Testis (tissue), 5 donors: ENCODE measurements at regions of chr3 and their contacts with region 1.

Region 1: GRCh38 chr3:47522082-47522987 is 8.8 kb upstream of the ELP6 start:
- DNase-seq: peak; percentile 93
- H3K4me3 ChIP-seq: no peak overlapping the region
- H3K27ac ChIP-seq: no peak overlapping the region
- H3K4me1 ChIP-seq: peaks cover 4% of the 10 kb centered on the region
- H3K27me3 ChIP-seq: no peaks in the 10 kb centered on the region
- CTCF ChIP-seq: peak; percentile 80 to 97 (median 95)
- POLR2A ChIP-seq: no peak

Region 2: GRCh38 chr3:47646362-47646761 is 124.0 kb after region 1 on chr3:
- intact Hi-C with region 1: no loop called
- DNase-seq: no peak
- H3K4me3 ChIP-seq: no peak overlapping the region
- H3K27ac ChIP-seq: no peak overlapping the region
- H3K4me1 ChIP-seq: no peaks in the 10 kb centered on the region
- H3K27me3 ChIP-seq: no peaks in the 10 kb centered on the region
- CTCF ChIP-seq: no peak
- POLR2A ChIP-seq: no peak

Region 3: DNA sequence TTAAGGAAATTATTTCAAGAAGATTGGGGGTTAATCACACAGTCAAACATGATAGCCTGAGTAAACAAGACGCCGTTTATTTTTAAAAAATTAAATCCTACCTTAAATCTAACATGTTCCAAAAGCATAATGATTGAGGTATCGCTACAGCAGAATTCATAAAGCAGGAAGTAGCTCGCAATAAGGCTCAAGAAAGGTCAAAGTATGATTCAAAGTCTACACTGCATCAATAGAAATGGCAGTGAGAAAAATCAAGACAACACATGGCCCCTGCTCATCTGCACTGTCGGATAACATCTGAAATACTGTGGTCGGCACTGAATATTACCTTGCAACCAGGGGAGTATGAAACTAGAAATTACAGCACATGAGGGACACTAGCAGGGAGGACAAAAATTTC is 166.2 kb after region 1 on chr3:
- intact Hi-C with region 1: no loop called
- DNase-seq: no peak
- H3K4me3 ChIP-seq: no peak overlapping the region
- H3K27ac ChIP-seq: no peak overlapping the region
- H3K4me1 ChIP-seq: no peaks in the 10 kb centered on the region
- H3K27me3 ChIP-seq: no peaks in the 10 kb centered on the region
- CTCF ChIP-seq: no peak
- POLR2A ChIP-seq: no peak

Region 4: DNA sequence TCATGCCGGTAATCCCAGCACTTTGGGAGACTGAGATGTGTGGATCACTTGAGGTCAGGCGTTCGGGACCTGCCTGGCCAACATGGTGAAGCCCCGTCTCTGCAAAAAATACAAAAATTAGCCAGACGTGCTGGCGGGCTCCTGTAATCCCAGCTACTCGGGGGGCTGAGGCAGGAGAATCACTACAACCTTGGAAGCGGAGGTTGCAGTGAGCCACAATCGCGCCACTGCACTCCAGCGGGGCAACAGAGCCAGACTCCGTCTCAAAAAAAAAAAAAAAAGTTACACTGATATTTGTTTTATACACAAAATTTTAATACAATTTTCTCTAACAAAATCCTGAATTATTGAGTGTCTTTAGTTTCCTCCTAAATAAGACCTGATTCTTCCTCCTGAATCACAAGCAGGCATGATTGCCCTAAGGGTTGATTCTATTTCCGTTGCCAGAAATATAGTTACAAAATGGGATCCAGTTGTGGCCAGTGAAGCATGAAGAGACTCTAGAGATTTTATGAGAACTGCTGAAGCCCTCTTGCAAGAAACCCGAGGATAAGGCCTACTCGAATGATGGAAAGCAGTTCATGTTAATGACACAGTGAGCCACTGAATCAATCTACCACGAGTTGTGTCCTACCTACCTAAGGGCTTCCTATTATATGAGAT is 269.0 kb after region 1 on chr3:
- intact Hi-C with region 1: loop called (anchors 5 kb)
- DNase-seq: no peak
- H3K4me3 ChIP-seq: no peak overlapping the region
- H3K27ac ChIP-seq: no peak overlapping the region
- H3K4me1 ChIP-seq: no peaks in the 10 kb centered on the region
- H3K27me3 ChIP-seq: no peaks in the 10 kb centered on the region
- CTCF ChIP-seq: no peak
- POLR2A ChIP-seq: no peak

Region 5: GRCh38 chr3:48318783-48319468 is 796.6 kb after region 1 on chr3:
- intact Hi-C with region 1: no loop called
- DNase-seq: no peak
- H3K4me3 ChIP-seq: no peak overlapping the region
- H3K27ac ChIP-seq: no peak overlapping the region
- H3K4me1 ChIP-seq: no peaks in the 10 kb centered on the region
- H3K27me3 ChIP-seq: no peaks in the 10 kb centered on the region
- CTCF ChIP-seq: no peak
- POLR2A ChIP-seq: no peak